Head of caudate nucleus (tissue), 42 donors: ENCODE measurements at regions of chr1 and their contacts with region 1.

Region 1: DNA sequence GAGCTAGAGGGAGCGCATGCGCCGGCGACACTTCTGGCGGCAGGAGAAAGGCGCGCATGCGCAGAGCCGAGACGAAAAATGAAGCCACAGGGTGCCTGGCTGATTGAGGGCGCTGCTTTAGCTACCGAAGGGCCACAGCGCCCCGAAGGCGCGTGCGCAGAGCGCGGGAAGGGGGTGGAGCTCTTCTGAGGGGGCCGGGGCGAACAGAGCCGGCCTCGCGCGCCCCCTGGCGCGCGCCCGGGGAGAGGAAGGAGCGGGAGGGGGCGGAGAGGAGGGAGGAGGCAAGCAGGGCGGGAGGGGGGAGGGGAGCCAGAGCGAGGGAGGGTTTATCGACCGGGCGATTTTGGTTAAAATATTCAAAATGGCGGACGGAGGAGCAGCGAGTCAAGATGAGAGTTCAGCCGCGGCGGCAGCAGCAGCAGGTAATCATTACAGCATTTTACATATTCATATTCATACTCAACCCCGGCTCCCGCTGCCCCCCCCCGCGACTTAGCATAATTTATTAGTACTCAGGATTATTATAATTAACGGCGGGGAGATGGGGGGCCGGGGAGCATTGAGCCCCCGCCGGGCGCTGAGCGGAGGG is at the start of gene POU2F1:
- DNase-seq: peak; percentile 94 to 99 (median 98)

Region 2: DNA sequence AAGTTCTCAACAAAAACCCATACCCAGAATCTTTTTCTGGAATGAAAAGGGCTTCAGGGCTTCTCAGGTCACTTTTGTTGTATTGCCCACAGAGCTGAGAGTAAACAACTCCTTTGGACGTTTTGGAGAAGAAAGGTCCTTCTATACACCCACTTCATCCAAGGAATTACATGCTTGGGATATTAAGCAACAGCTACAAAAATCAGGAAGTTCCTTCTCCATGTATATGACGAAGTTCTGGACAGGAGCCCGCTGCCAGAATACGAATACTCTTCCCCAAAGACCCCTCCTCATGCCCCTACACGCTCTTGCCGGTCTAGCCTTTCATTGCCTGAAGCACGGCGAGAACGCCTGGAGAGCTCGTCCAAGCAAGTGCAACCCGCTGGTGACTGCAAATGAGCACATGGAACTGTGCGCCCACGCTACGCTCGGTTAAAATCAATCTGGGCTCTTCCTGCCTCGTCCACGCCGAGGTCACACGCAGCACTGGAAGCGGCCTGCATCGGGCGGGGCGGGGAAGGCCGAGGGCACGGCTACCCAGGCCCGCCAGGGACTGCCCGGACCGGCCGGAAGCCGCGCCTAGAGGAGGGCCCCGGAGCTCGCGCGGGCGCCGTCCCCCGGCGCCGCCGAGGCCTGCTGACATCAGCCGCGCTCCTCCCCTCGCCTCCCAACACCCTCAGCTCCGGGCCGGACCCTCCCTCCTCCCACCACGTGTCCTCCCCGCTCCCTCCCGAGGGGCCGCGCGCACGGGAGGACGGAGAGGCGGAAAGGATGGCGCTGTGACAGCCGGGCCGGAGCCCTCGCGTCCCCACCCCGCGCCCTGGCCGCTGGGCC is 381.6 kb before region 1 on chr1 and contains the start of gene POGK:
- intact Hi-C with region 1: loop called (anchors 10 kb)
- DNase-seq: peak; percentile 78 to 97 (median 94)

Region 3: DNA sequence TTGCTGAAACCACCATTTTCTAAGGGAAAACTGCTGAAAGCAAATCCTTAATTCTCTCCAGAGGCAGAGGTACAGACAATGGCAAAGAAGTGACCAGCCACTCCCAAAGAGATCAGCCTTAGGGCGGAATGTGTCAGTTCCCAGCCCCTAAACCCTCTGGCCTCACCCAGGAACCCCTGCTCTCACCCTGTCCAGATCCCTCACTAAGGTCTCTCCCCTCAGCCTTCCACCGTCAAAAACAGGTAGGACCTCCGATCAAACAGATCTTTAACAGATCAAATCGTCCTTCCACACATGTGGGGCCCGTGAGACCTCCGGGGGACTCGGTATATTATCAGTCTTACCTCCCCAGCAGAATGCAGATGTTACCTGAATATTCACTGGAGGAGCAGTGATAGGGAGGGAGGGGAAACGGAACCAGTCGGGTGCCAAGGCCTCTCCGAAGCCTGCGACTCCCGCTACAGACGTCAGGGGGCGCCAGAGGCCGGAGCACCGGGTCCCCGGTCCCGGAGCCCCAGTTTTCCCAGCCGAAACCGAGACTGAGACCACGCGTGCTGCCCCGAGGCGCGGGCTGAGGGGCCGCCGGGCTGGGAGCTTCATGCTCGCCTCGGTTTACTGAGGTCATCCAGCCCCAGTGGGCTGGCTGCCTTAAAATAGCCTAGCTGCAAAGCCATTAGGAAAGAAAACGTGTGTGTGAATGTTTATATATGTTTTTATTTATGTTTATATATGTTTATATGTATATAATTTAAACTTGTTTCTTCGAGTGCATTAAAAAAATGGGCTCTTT is 154.1 kb before region 1 on chr1:
- intact Hi-C with region 1: loop called (anchors 5 kb)
- DNase-seq: peak; percentile 67 to 94 (median 87)

Region 4: DNA sequence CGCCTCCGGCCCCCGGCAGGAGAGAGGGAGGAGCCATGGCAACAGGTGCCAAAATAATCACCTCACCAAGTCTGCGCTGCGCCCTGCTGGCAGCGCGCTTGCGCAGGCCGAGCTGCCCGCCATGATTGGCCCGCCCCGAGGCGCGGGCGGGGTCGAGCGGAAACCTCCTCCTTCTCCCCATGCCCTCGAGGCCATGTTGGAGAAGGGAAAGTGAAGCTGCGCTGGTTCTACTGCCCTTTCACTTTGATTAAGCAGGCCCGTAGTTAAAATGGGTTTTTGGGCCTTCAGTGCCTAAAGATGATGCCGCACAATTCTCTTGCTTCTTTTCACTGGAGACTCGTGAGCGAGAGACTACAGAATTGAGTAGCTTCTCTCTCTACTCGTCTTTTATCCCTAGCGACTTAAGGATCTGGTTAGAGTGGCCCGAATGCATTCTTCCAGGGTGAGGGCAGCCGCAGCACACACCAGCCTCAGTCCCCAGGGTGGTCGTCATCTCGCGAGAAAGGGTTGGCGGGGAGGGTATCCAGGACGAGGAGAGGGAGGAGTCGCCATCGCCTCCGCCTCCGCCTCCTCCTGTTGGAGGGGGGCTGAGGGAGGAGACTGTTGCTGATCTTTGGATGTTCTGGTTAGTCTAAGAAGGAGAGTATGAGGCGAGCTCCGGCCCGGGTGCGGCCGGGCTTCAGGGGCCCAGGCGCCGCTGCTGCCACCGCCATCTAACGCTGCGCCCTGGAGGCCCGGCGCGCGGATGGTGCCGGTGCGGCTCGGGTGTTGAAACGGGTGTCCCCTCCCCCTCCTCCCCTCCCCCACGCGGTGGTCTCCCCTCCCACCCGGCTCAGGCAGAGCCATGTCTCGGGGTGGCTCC is 715.7 kb after region 1 on chr1 and contains the start of gene DCAF6:
- intact Hi-C with region 1: loop called (anchors 10 kb)
- DNase-seq: peak; percentile 89 to 98 (median 95)